ENCODE measurements at regions of chr3 and their contacts with region 1.

Region 1: DNA sequence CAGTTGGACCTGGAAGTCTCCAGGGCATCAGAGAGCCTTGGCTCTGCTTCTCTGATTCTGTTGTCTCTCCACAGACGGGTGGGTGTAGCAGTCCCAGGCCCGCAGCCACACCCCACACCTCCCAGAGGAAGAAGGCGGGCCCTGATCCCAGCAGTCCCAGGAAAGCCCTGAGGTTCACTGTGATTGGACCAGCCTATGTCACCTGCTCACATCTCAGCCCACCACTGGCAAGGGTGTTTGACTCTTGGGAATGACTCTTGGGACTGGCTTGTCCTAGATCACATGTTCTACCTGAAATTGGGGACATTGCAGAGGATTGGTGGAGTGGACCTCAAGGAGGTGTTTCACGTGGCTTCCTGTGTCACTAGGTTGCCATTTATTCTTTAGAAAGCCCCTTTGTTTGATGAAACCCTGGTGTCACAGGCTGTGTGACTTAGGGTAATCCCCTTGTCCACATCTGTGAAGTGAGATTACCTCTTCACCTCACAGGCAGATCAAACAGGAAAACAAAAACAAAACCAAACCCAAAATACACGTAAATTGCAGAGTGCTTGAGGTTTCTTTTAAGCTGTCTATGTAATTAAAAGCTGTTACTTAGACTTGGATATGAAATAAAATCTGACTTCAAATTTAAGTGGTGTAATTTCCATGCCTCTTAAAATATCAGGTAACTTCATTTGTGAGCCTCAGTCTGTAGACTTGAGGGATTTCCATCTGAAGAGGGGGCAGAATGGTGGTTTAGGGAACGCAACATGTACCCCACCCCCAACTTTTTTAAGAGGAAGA is 26.7 kb downstream of the FLNB start:
- DNase-seq: peak; percentile 66
- ATAC-seq: peak; percentile 98
- H3K4me3 Mint-ChIP-seq: peak overlapping the region; percentile 19
- H3K27ac Mint-ChIP-seq: peak overlapping the region; percentile 86
- H3K4me1 Mint-ChIP-seq: peaks cover 53% of the 10 kb centered on the region
- H3K27me3 Mint-ChIP-seq: no peaks in the 10 kb centered on the region

Region 2: GRCh38 chr3:58052373-58053273 is 17.7 kb after region 1 on chr3:
- CTCF ChIA-PET with region 1: interaction called, 4 read pairs
- POLR2A ChIA-PET with region 1: no interaction called
- intact Hi-C with region 1: loop called in 1 of 2 experiments (anchors 1 kb)
- DNase-seq: peak; percentile 80
- ATAC-seq: peak; percentile 93
- H3K4me3 Mint-ChIP-seq: no peak overlapping the region
- H3K27ac Mint-ChIP-seq: no peak overlapping the region
- H3K4me1 Mint-ChIP-seq: peaks cover 26% of the 10 kb centered on the region
- H3K27me3 Mint-ChIP-seq: no peaks in the 10 kb centered on the region

Region 3: DNA sequence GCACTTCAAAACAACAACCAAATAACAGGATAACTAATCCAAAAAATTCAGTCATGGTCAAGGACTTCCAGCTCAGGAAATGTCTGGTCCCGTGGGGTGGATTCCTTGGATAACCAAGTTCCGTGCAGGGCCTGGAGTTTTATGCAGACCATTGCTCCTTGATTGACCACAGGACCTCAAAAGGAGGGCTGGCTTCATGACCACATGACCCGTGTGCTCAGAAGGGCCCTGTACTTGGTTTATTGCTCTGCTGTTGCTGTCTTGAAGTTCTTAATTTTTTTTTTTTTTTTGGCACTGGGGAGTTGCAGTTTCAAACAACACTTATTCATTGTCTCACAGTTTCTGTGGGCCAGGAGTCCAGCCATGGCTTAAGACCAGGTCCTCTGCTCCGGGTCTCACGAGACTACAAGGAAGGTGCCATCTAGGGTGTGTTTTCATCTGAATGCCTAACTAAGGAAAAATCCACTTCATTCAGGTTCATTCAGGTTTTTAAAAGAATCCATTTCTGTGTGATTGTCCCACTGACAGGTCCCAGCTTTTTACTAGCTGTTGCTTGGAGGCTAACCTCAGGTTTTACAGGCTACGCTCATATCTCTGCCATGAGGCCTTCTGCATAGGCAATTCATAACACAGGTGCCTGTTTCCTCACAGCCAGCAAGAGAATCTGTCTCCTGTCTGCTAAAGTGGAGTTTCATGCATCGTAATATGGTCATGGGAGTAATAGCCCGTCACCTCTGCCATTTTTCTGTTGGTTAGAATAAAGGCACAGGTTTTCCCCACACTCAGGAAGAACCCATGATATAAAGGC is 38.6 kb after region 1 on chr3:
- CTCF ChIA-PET with region 1: interaction called, 5 read pairs
- POLR2A ChIA-PET with region 1: no interaction called
- intact Hi-C with region 1: loop called (anchors 2 to 5 kb)
- DNase-seq: no peak
- ATAC-seq: peak; percentile 31
- H3K4me3 Mint-ChIP-seq: no peak overlapping the region
- H3K27ac Mint-ChIP-seq: no peak overlapping the region
- H3K4me1 Mint-ChIP-seq: peaks cover 30% of the 10 kb centered on the region
- H3K27me3 Mint-ChIP-seq: no peaks in the 10 kb centered on the region

Region 4: GRCh38 chr3:58079773-58080172 is 44.8 kb after region 1 on chr3:
- CTCF ChIA-PET with region 1: no interaction called
- POLR2A ChIA-PET with region 1: no interaction called
- intact Hi-C with region 1: loop called (anchors 2 to 5 kb)
- DNase-seq: no peak
- ATAC-seq: no peak
- H3K4me3 Mint-ChIP-seq: no peak overlapping the region
- H3K27ac Mint-ChIP-seq: no peak overlapping the region
- H3K4me1 Mint-ChIP-seq: peaks cover 49% of the 10 kb centered on the region
- H3K27me3 Mint-ChIP-seq: no peaks in the 10 kb centered on the region

Region 5: GRCh38 chr3:58116161-58116955 is 81.4 kb after region 1 on chr3:
- CTCF ChIA-PET with region 1: no interaction called
- POLR2A ChIA-PET with region 1: no interaction called
- intact Hi-C with region 1: no loop called
- DNase-seq: peak; percentile 52
- ATAC-seq: peak; percentile 79
- H3K4me3 Mint-ChIP-seq: no peak overlapping the region
- H3K27ac Mint-ChIP-seq: peak overlapping the region; percentile 26
- H3K4me1 Mint-ChIP-seq: peaks cover 29% of the 10 kb centered on the region
- H3K27me3 Mint-ChIP-seq: no peaks in the 10 kb centered on the region

Measured in activated CD4-positive, alpha-beta T cell treated with anti-CD3 and anti-CD28 coated beads for 36 hours (primary cell).